ENCODE measurements at regions of chr18 and their contacts with region 1.

Region 1: DNA sequence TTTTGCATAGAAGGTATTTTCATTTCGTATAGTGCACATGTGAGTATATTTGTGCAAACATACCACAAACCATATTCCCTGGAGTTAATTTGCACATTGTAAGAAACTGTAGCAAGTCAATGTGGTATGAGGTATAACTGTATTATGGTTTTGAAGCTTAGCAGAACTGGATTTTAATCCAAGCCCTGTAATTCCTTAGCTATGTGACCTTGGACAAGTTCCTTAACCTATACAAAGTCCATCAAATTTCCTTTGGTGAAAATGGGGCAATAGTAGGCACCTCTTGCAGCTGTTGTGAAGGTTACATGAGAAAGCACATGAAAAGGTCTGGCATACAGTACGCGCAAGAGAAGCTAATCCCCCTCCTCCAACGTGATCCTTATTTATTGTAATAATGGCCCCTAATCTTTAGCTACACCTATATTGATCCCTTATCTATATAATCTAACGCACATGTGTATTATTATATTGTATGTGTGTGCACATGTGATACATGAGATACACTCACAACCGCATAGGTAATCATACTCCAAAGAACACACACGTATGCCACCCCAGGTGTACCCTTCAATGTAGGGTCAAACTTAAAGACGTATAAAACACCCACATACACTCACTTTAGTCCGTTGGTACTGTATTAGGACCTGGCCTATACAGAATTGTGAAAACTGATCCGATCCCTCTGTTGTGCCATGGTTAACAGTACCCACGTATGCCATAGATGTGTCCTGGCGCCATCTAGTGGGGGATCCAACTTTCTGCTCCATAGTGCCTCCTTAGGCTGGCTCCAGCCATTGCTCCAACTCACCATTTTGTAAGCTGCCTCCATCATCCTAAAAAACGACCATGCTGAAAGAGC is 402.9 kb upstream of the SLC14A2 start:
- DNase-seq: peak; percentile 89
- H3K4me3 Mint-ChIP-seq: no peak overlapping the region
- H3K27ac Mint-ChIP-seq: no peak overlapping the region
- H3K4me1 Mint-ChIP-seq: no peaks in the 10 kb centered on the region
- H3K27me3 Mint-ChIP-seq: no peaks in the 10 kb centered on the region
- CTCF ChIP-seq: peak; percentile 99

Region 2: DNA sequence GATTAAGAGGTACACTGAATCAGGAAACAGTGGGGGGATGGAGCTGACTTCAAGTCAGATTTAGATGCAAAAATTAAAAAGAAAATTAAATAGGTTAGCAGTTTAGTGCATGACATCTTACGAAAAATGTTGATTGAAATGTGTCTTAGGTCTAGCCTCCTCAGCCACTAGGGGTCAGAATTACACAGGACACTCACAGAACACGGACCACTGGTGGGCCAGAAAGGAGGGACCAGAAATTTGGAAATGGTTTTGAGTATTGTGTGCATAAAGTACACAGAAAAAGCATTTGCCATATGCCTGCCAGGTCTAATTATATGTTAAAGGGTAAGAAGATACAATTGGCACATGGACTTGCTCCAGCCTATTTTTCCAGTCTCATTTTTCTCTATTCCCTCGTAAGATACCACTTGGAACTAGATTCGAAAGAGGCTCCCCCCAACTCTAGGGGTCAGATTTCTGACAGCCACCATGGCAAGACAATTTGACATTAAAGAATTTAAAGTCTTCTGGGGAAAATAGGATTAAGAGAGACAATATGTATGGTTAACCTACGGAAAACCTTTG is 1082.0 kb before region 1 on chr18:
- CTCF ChIA-PET with region 1: interaction called, 5 read pairs
- POLR2A ChIA-PET with region 1: no interaction called
- intact Hi-C with region 1: loop called (anchors 5 kb)
- DNase-seq: peak; percentile 61
- H3K4me3 Mint-ChIP-seq: no peak overlapping the region
- H3K27ac Mint-ChIP-seq: no peak overlapping the region
- H3K4me1 Mint-ChIP-seq: peaks cover 6% of the 10 kb centered on the region
- H3K27me3 Mint-ChIP-seq: no peaks in the 10 kb centered on the region
- CTCF ChIP-seq: peak; percentile 78

Region 3: DNA sequence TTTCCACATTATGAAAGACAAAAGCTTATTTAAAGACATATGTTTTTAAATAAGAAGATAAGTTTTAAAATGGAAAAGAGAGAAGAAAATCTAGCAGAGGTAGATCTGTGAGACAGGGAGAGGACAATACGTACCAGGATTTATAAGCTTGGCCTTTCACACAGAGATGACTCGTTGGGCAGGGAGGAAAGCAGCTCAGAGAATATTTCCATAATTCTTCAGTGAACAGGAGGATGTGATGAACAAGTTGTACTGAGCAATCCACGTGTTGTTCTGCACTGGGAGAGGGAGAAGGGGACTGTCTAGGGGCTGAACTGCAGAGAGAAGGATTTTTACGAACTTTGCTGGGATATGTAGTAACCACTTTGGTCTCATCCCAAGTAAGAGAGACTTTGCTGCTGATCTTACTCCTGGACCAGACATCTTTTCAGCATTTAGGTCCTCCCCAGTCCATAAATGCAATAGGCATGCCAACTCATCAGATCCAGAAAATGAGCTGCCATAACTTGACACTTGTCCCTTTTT is 694.3 kb before region 1 on chr18:
- CTCF ChIA-PET with region 1: no interaction called
- POLR2A ChIA-PET with region 1: no interaction called
- intact Hi-C with region 1: no loop called
- DNase-seq: no peak
- H3K4me3 Mint-ChIP-seq: no peak overlapping the region
- H3K27ac Mint-ChIP-seq: no peak overlapping the region
- H3K4me1 Mint-ChIP-seq: peaks cover 14% of the 10 kb centered on the region
- H3K27me3 Mint-ChIP-seq: no peaks in the 10 kb centered on the region
- CTCF ChIP-seq: no peak

Region 4: GRCh38 chr18:44679056-44679905 is 533.1 kb before region 1 on chr18:
- CTCF ChIA-PET with region 1: interaction called, 6 read pairs
- POLR2A ChIA-PET with region 1: no interaction called
- intact Hi-C with region 1: loop called (anchors 1 kb)
- DNase-seq: peak; percentile 78
- H3K4me3 Mint-ChIP-seq: peak overlapping the region; percentile 71
- H3K27ac Mint-ChIP-seq: peak overlapping the region; percentile 31
- H3K4me1 Mint-ChIP-seq: no peaks in the 10 kb centered on the region
- H3K27me3 Mint-ChIP-seq: no peaks in the 10 kb centered on the region
- CTCF ChIP-seq: peak; percentile 39

Region 5: GRCh38 chr18:44895176-44895798 is 317.1 kb before region 1 on chr18:
- CTCF ChIA-PET with region 1: interaction called, 11 read pairs
- POLR2A ChIA-PET with region 1: no interaction called
- intact Hi-C with region 1: no loop called
- DNase-seq: peak; percentile 76
- H3K4me3 Mint-ChIP-seq: no peak overlapping the region
- H3K27ac Mint-ChIP-seq: no peak overlapping the region
- H3K4me1 Mint-ChIP-seq: peaks cover 8% of the 10 kb centered on the region
- H3K27me3 Mint-ChIP-seq: no peaks in the 10 kb centered on the region
- CTCF ChIP-seq: peak; percentile 45

Region 6: GRCh38 chr18:45044787-45045186 is 167.6 kb before region 1 on chr18:
- CTCF ChIA-PET with region 1: interaction called, 11 read pairs
- POLR2A ChIA-PET with region 1: no interaction called
- intact Hi-C with region 1: no loop called
- DNase-seq: no peak
- H3K4me3 Mint-ChIP-seq: no peak overlapping the region
- H3K27ac Mint-ChIP-seq: no peak overlapping the region
- H3K4me1 Mint-ChIP-seq: no peaks in the 10 kb centered on the region
- H3K27me3 Mint-ChIP-seq: no peaks in the 10 kb centered on the region
- CTCF ChIP-seq: no peak

Region 7: DNA sequence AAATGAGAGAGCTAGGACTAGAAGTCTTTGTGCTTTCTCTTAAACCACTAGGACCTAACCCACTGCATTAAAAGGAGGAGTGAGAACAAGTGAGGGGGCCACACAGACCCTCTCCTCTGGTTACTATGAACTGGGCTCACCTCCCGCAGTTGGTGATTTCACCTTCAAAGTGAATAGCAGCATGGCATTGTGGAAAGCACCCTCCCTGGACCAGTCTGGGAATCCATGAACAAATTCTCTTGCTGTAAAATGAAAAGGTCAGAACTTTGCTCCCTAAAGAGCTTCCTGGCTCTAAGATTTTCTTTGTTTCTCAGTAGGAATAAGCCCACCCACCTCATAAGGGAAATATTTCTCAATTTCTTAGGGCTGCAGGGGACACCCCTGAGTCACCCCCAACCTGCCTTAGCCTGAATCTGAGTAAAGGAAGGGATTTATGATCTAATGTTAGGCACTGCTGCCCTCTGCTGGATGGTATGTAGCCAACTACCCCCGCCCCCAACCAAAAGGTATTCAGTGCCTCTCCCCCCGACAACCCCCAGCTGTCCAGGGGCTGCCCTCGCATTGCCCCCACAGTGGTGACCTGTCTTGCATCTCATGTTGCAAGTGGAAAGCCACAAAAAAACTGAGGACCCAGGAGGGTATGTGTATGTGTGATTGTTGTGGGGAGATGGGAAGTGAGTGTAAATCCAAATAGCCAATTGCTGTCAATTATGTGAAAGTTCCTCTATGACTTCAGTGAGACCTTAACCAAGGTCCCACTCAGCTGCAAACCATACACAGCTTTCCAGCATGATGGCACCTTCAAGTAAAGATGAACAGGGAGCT is 171.9 kb after region 1 on chr18:
- CTCF ChIA-PET with region 1: interaction called, 15 read pairs
- POLR2A ChIA-PET with region 1: no interaction called
- intact Hi-C with region 1: loop called (anchors 10 kb)
- DNase-seq: peak; percentile 72
- H3K4me3 Mint-ChIP-seq: no peak overlapping the region
- H3K27ac Mint-ChIP-seq: no peak overlapping the region
- H3K4me1 Mint-ChIP-seq: peaks cover 6% of the 10 kb centered on the region
- H3K27me3 Mint-ChIP-seq: no peaks in the 10 kb centered on the region
- CTCF ChIP-seq: peak; percentile 69

Measured in MCF 10A (cell line).